Naive thymus-derived CD4-positive, alpha-beta T cell (primary cell): ENCODE measurements at regions of chr16 and their contacts with region 1.

Region 1: GRCh38 chr16:21584817-21585216 is 14.6 kb upstream of the METTL9 start:
- DNase-seq: no peak
- ATAC-seq: no peak
- H3K4me3 ChIP-seq: no peak overlapping the region
- H3K4me3 Mint-ChIP-seq: no peak overlapping the region
- H3K27ac ChIP-seq: no peak overlapping the region
- H3K27ac Mint-ChIP-seq: no peak overlapping the region
- H3K4me1 ChIP-seq: no peaks in the 10 kb centered on the region
- H3K4me1 Mint-ChIP-seq: peaks cover 0 to 8% (median 0%) of the 10 kb centered on the region in 7 donors
- H3K27me3 ChIP-seq: no peaks in the 10 kb centered on the region
- H3K27me3 Mint-ChIP-seq: peaks cover 0 to 13% (median 0%) of the 10 kb centered on the region in 5 donors

Region 2: GRCh38 chr16:21501909-21502667 is 82.7 kb before region 1 on chr16:
- CTCF ChIA-PET with region 1: no interaction called
- POLR2A ChIA-PET with region 1: no interaction called
- intact Hi-C with region 1: no loop called
- DNase-seq: peak; percentile 85 to 99 (median 96)
- ATAC-seq: peak; percentile 90
- H3K4me3 ChIP-seq: peak overlapping the region; percentile 91
- H3K4me3 Mint-ChIP-seq: peak overlapping the region; percentile 76 to 94 (median 86)
- H3K27ac ChIP-seq: peak overlapping the region; percentile 92
- H3K27ac Mint-ChIP-seq: peak overlapping the region; percentile 71 to 93 (median 89)
- H3K4me1 ChIP-seq: peaks cover 4 to 7% of the 10 kb centered on the region in 2 donors
- H3K4me1 Mint-ChIP-seq: peaks cover 11 to 26% (median 16%) of the 10 kb centered on the region in 7 donors
- H3K27me3 ChIP-seq: no peaks in the 10 kb centered on the region
- H3K27me3 Mint-ChIP-seq: no peaks in the 10 kb centered on the region

Region 3: DNA sequence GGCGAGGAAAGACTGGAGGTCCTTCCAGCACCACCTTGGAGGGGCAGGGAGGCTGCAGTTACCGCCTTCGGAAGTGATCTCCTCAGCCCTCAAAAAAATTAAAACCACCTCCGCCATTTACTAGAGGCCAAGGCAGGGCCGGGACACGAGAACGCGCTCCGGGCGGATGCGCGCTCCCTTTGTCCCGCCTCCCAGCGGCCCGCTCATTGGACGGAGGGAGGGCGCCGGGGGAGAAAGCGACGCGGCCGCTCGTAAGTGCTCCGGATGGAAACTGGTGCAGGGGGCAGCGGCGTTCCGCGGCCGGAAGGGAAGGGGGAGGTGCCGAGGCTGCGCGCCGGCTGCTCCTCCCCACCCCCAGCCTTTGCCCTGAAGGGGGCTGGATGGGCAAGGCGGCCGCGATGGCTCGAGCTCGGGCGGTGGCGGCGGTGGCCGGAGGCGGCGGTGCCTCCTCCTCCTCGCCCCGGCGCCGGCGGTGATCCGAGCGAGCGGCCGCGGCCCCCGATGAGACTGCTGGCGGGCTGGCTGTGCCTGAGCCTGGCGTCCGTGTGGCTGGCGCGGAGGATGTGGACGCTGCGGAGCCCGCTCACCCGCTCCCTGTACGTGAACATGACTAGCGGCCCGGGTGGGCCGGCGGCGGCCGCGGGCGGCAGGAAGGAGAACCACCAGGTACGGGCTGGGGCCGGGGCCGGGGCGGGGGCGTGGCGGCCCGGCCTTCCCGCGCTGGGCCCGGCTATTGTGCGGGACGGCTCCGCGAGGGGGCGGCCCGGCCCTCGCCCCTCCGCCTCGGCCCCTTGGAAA is 14.6 kb after region 1 on chr16 and contains the start of gene METTL9:
- CTCF ChIA-PET with region 1: interaction called, 3 read pairs
- POLR2A ChIA-PET with region 1: interaction called, 5 read pairs
- intact Hi-C with region 1: loop called (anchors 1 to 2 kb)
- DNase-seq: peak; percentile 92 to 96 (median 94)
- ATAC-seq: peak; percentile 96
- H3K4me3 ChIP-seq: peak within 1 kb of the TSS; percentile 82
- H3K4me3 Mint-ChIP-seq: peak within 1 kb of the TSS; percentile 91 to 98 (median 94)
- H3K27ac ChIP-seq: peak within 1 kb of the TSS; percentile 91
- H3K27ac Mint-ChIP-seq: peak within 1 kb of the TSS; percentile 86 to 99 (median 96)
- H3K4me1 ChIP-seq: peaks cover 21 to 32% of the 10 kb centered on the region in 2 donors
- H3K4me1 Mint-ChIP-seq: peaks cover 45 to 70% (median 54%) of the 10 kb centered on the region in 7 donors
- H3K27me3 ChIP-seq: no peaks in the 10 kb centered on the region
- H3K27me3 Mint-ChIP-seq: no peaks in the 10 kb centered on the region
- total RNA-seq, gene METTL9: 68.4 to 128 (median 80.1) TPM

Region 4: GRCh38 chr16:21638573-21638975 is 53.8 kb after region 1 on chr16:
- CTCF ChIA-PET with region 1: interaction called, 83 read pairs
- POLR2A ChIA-PET with region 1: interaction called, 14 read pairs
- intact Hi-C with region 1: loop called (anchors 1 kb)
- DNase-seq: peak in 2 of 9 donors; percentile 16 to 27
- ATAC-seq: peak; percentile 52
- H3K4me3 ChIP-seq: no peak overlapping the region
- H3K4me3 Mint-ChIP-seq: peak overlapping the region in 8 of 10 donors; percentile 2 to 34 (median 14)
- H3K27ac ChIP-seq: peak overlapping the region; percentile 26
- H3K27ac Mint-ChIP-seq: peak overlapping the region; percentile 14 to 90 (median 66)
- H3K4me1 ChIP-seq: peaks cover 17 to 24% of the 10 kb centered on the region in 2 donors
- H3K4me1 Mint-ChIP-seq: peaks cover 9 to 32% (median 24%) of the 10 kb centered on the region in 7 donors
- H3K27me3 ChIP-seq: no peaks in the 10 kb centered on the region
- H3K27me3 Mint-ChIP-seq: no peaks in the 10 kb centered on the region

Region 5: DNA sequence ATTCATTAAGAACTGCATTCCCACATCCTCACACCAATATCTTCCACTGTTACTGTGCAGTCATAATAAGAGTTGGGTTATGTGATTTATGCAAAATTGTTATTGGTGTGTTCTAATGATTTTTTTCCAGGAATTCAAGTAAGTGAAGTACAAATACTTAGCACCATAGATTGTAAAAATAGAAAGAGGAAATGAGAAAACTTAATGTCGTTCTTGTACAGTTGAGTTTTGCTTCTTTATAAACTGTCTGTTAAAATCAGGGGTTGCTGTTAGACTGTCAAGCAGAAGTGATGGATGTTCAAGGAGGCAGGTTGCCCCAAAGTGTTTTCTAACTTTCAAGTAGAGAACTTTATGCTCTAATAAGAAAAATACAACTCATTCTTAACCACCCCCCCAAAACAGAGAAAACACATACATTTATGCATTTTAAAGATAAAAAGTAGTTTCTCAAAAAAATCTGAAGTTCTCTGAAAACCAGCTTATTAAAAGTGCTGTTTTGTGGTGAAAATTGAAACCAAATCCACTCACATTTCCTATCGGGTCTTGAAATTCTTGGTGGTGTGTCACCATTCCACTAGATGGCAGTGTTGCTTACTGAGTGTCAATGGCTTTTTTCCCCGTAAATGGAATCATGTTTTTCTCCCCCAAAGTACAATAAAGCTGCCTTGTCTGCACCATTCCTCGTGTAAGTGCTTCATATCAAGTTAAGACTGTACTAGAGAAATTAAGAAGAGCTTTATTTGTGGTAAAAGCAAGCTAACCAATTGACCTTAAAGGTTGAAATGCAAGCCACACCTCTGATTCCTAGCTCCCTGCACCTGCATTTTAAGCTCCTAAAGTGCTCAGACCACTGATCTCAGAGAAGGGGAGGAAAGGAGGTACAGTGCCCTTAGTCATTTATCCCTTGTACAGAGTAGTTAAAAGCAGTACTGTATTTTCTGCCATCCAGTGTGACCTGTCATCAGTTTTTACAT is 72.3 kb after region 1 on chr16:
- CTCF ChIA-PET with region 1: interaction called, 19 read pairs
- POLR2A ChIA-PET with region 1: no interaction called
- intact Hi-C with region 1: no loop called
- DNase-seq: peak in 7 of 9 donors; percentile 50 to 71 (median 66)
- ATAC-seq: peak; percentile 72
- H3K4me3 ChIP-seq: no peak overlapping the region
- H3K4me3 Mint-ChIP-seq: peak overlapping the region in 5 of 10 donors; percentile 7 to 48 (median 33)
- H3K27ac ChIP-seq: no peak overlapping the region
- H3K27ac Mint-ChIP-seq: peak overlapping the region in 8 of 9 donors; percentile 5 to 87 (median 26)
- H3K4me1 ChIP-seq: peaks cover 16 to 24% of the 10 kb centered on the region in 2 donors
- H3K4me1 Mint-ChIP-seq: peaks cover 20 to 45% (median 37%) of the 10 kb centered on the region in 7 donors
- H3K27me3 ChIP-seq: no peaks in the 10 kb centered on the region
- H3K27me3 Mint-ChIP-seq: no peaks in the 10 kb centered on the region

Region 6: GRCh38 chr16:21684199-21684598 is 99.4 kb after region 1 on chr16:
- CTCF ChIA-PET with region 1: interaction called, 10 read pairs
- POLR2A ChIA-PET with region 1: no interaction called
- intact Hi-C with region 1: no loop called
- DNase-seq: peak in 3 of 9 donors; percentile 13 to 22 (median 19)
- ATAC-seq: no peak
- H3K4me3 ChIP-seq: no peak overlapping the region
- H3K4me3 Mint-ChIP-seq: no peak overlapping the region
- H3K27ac ChIP-seq: no peak overlapping the region
- H3K27ac Mint-ChIP-seq: no peak overlapping the region
- H3K4me1 ChIP-seq: no peaks in the 10 kb centered on the region
- H3K4me1 Mint-ChIP-seq: peaks cover 0 to 2% (median 0%) of the 10 kb centered on the region in 7 donors
- H3K27me3 ChIP-seq: no peaks in the 10 kb centered on the region
- H3K27me3 Mint-ChIP-seq: peaks cover 0 to 10% (median 6%) of the 10 kb centered on the region in 5 donors

Region 7: DNA sequence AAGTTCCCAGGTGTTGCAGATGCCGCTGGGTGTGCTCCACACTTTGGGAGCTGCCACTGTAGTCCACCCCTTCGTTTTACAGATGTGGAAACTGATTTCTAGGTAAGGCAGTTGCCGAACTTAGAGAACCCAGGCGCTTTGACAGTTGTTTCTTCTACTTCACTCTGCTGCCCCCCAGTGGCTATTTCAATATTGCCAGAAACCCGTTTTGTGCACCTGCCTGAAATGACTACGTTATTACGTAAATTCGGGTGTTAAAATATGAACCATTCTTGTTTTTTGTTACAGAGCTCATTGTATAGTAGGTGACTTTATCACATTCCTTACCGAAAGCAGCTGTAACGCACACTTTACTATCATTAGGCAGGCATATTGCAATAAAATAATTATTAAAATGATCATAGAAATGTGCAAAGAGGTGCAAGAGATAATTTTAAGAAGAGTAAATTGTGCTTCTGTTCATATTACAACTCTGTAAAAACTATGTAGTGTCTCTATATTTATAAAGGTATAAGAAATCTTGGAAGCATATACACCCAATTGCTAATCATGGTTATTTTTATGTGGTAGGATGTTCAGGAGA is 123.8 kb after region 1 on chr16:
- CTCF ChIA-PET with region 1: interaction called, 35 read pairs
- POLR2A ChIA-PET with region 1: no interaction called
- intact Hi-C with region 1: loop called (anchors 1 to 2 kb)
- DNase-seq: peak; percentile 51 to 87 (median 79)
- ATAC-seq: peak; percentile 86
- H3K4me3 ChIP-seq: no peak overlapping the region
- H3K4me3 Mint-ChIP-seq: no peak overlapping the region
- H3K27ac ChIP-seq: no peak overlapping the region
- H3K27ac Mint-ChIP-seq: peak overlapping the region in 2 of 9 donors; percentile 53 to 59
- H3K4me1 ChIP-seq: peaks cover 0 to 3% of the 10 kb centered on the region in 2 donors
- H3K4me1 Mint-ChIP-seq: peaks cover 0 to 4% (median 3%) of the 10 kb centered on the region in 7 donors
- H3K27me3 ChIP-seq: no peaks in the 10 kb centered on the region
- H3K27me3 Mint-ChIP-seq: no peaks in the 10 kb centered on the region

Region 8: GRCh38 chr16:22098405-22099255 is 513.8 kb after region 1 on chr16:
- CTCF ChIA-PET with region 1: no interaction called
- POLR2A ChIA-PET with region 1: no interaction called
- intact Hi-C with region 1: no loop called
- DNase-seq: peak in 7 of 9 donors; percentile 15 to 55 (median 42)
- ATAC-seq: peak; percentile 76
- H3K4me3 ChIP-seq: no peak overlapping the region
- H3K4me3 Mint-ChIP-seq: peak overlapping the region in 4 of 10 donors; percentile 34 to 74 (median 53)
- H3K27ac ChIP-seq: no peak overlapping the region
- H3K27ac Mint-ChIP-seq: peak overlapping the region in 1 of 9 donors; percentile 19
- H3K4me1 ChIP-seq: no peaks in the 10 kb centered on the region
- H3K4me1 Mint-ChIP-seq: peaks cover 0 to 5% (median 0%) of the 10 kb centered on the region in 7 donors
- H3K27me3 ChIP-seq: no peaks in the 10 kb centered on the region
- H3K27me3 Mint-ChIP-seq: peaks cover 9 to 24% (median 17%) of the 10 kb centered on the region in 5 donors